Heart left ventricle (tissue), 16 donors: ENCODE measurements at regions of chr2 and their contacts with region 1.

Region 1: GRCh38 chr2:68121873-68122679 is 35.6 kb upstream of the PNO1 start:
- DNase-seq: peak; percentile 80 to 92 (median 85)
- ATAC-seq: peak; percentile 33 to 79 (median 76)
- H3K4me3 ChIP-seq: no peak overlapping the region
- H3K27ac ChIP-seq: no peak overlapping the region
- H3K4me1 ChIP-seq: peaks cover 0 to 13% (median 3%) of the 10 kb centered on the region in 12 donors
- H3K27me3 ChIP-seq: no peaks in the 10 kb centered on the region
- CTCF ChIP-seq: peak; percentile 91 to 98 (median 97)
- POLR2A ChIP-seq: no peak

Region 2: DNA sequence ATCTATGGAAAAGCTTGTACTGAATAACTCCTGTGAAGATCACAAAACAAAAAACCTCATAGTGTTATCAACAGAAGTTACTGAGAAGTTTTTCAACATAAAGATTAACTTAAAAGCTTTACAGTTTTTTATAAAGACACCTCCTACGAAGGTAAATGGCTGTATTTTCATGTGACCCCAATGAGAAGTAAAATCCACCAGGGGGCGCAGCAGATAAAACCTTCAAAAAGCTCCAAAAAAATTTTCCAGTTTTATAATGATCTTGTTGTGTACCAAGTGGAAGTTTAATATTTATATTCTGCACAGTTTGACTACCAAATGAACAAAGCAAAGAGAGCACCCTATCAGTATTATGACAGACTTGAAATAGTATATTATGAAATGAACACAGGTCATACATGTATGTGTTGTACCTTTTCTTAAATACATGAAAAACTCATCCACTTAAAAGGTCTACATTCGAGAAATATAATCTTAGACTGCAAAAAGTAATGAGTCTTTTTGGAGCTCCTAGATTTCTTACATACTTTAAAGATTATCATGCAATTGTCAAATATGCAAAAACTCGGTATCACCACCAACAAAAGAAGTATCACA is 74.1 kb after region 1 on chr2:
- intact Hi-C with region 1: loop called in 1 of 10 experiments (anchors 10 kb)
- DNase-seq: no peak
- ATAC-seq: peak in 1 of 4 donors; percentile 47
- H3K4me3 ChIP-seq: no peak overlapping the region
- H3K27ac ChIP-seq: no peak overlapping the region
- H3K4me1 ChIP-seq: peaks cover 0 to 57% (median 19%) of the 10 kb centered on the region in 12 donors
- H3K27me3 ChIP-seq: no peaks in the 10 kb centered on the region
- CTCF ChIP-seq: peak in 11 of 12 donors; percentile 42 to 87 (median 77)
- POLR2A ChIP-seq: no peak

Region 3: GRCh38 chr2:68251187-68251854 is 129.2 kb after region 1 on chr2:
- intact Hi-C with region 1: loop called in 3 of 10 experiments (anchors 5 to 10 kb)
- DNase-seq: peak; percentile 71 to 79 (median 75)
- ATAC-seq: peak; percentile 53 to 69 (median 61)
- H3K4me3 ChIP-seq: peak overlapping the region; percentile 45 to 93 (median 80)
- H3K27ac ChIP-seq: peak overlapping the region; percentile 89 to 97 (median 94)
- H3K4me1 ChIP-seq: peaks cover 9 to 73% (median 53%) of the 10 kb centered on the region in 12 donors
- H3K27me3 ChIP-seq: no peaks in the 10 kb centered on the region
- CTCF ChIP-seq: peak; percentile 47 to 78 (median 68)
- POLR2A ChIP-seq: no peak

Region 4: DNA sequence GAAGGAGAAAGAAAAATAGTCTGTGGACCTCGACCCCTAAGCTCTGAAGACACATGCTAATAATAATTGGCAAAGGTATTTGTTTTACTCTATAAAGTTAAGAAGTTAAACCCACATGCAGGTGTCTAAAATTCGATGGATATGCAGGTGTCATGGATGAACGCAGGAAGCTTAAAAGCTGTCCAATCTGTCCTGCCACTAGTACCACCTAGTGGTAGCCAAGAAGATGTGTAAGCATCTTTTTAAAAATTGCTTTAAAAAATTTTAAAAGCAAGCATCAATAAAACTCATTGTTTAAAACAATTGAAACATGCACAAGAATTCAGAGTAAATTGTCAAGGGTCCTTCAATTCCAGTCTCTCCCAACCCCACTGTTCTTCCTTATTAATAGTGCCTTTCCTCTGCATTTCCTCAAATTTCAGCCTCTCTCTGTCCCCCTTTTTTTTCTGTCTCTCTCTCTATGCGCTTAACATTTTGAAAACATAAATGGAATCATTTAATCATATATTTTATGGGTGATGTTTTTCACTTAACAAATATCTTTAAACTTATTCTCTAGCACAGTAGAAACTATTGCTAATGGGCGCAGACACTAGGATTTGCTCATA is 160.8 kb after region 1 on chr2:
- intact Hi-C with region 1: loop called (anchors 1 to 5 kb)
- DNase-seq: no peak
- ATAC-seq: no peak
- H3K4me3 ChIP-seq: no peak overlapping the region
- H3K27ac ChIP-seq: no peak overlapping the region
- H3K4me1 ChIP-seq: peaks cover 0 to 34% (median 7%) of the 10 kb centered on the region in 12 donors
- H3K27me3 ChIP-seq: no peaks in the 10 kb centered on the region
- CTCF ChIP-seq: peak; percentile 58 to 80 (median 74)
- POLR2A ChIP-seq: no peak

Region 5: DNA sequence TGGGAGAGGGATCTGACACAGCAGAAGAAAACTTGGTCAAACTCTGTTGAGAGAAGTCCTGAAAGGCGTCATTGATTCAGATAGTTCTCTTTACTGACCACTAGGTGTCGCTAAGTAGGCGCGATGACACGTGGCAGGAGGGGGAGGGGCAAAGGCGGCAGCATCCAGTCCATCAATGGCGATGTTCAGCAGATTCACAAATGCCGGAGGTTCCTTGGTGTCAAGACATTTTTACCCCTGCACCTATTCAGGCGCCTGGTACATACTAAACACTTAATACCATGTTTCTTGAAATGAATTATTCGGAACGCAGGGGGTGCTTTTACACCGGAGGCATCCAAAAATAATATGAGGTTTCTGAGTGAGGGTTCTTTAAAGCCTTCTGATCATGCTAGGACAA is 240.0 kb after region 1 on chr2:
- intact Hi-C with region 1: loop called in 8 of 10 experiments (anchors 2 to 10 kb)
- DNase-seq: peak; percentile 67 to 89 (median 79)
- ATAC-seq: peak in 3 of 4 donors; percentile 73 to 82 (median 75)
- H3K4me3 ChIP-seq: peak overlapping the region in 3 of 12 donors; percentile 24 to 43 (median 27)
- H3K27ac ChIP-seq: peak overlapping the region in 1 of 12 donors; percentile 86
- H3K4me1 ChIP-seq: peaks cover 0 to 24% (median 0%) of the 10 kb centered on the region in 12 donors
- H3K27me3 ChIP-seq: no peaks in the 10 kb centered on the region
- CTCF ChIP-seq: peak; percentile 54 to 83 (median 74)
- POLR2A ChIP-seq: no peak

Region 6: DNA sequence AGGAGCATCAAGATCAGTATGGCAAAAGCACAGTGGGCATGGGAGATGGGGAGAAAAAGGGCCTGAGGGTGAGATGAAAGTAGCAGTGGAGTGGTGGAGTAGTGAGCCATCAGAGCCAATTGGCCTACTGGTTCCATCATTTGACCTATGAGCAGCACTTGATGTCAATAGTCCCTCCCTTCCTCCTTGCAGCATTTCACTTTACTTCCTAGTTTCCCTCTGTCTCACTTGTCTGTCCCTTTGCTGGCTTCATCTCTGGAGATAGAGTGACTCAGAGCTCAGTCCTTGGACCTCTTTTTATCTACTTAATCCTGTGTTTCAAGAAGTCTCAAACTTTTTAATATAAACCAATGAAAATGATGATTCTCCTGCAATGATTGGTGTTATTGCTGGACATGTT is 312.9 kb after region 1 on chr2:
- intact Hi-C with region 1: loop called in 8 of 10 experiments (anchors 2 to 5 kb)
- DNase-seq: no peak
- ATAC-seq: peak in 2 of 4 donors; percentile 16 to 30
- H3K4me3 ChIP-seq: no peak overlapping the region
- H3K27ac ChIP-seq: peak overlapping the region in 2 of 12 donors; percentile 60 to 62
- H3K4me1 ChIP-seq: peaks cover 0 to 27% (median 14%) of the 10 kb centered on the region in 12 donors
- H3K27me3 ChIP-seq: no peaks in the 10 kb centered on the region
- CTCF ChIP-seq: no peak
- POLR2A ChIP-seq: no peak

Region 7: GRCh38 chr2:68441179-68441993 is 319.3 kb after region 1 on chr2:
- intact Hi-C with region 1: loop called (anchors 1 to 5 kb)
- DNase-seq: peak in 4 of 5 donors; percentile 81 to 86 (median 82)
- ATAC-seq: peak; percentile 82 to 93 (median 91)
- H3K4me3 ChIP-seq: no peak overlapping the region
- H3K27ac ChIP-seq: peak overlapping the region in 8 of 12 donors; percentile 10 to 69 (median 40)
- H3K4me1 ChIP-seq: peaks cover 0 to 20% (median 13%) of the 10 kb centered on the region in 12 donors
- H3K27me3 ChIP-seq: no peaks in the 10 kb centered on the region
- CTCF ChIP-seq: peak; percentile 85 to 94 (median 89)
- POLR2A ChIP-seq: no peak